A673 (cell line): ENCODE measurements at regions of chr13 and their contacts with region 1.

Region 1: GRCh38 chr13:46721054-46721453 is 75.9 kb downstream of the ESD start:
- DNase-seq: peak; percentile 71
- H3K4me3 ChIP-seq: no peak overlapping the region
- H3K27ac ChIP-seq: no peak overlapping the region
- H3K4me1 ChIP-seq: peaks cover 21% of the 10 kb centered on the region
- H3K27me3 ChIP-seq: no peaks in the 10 kb centered on the region
- CTCF ChIP-seq: peak; percentile 78

Region 2: DNA sequence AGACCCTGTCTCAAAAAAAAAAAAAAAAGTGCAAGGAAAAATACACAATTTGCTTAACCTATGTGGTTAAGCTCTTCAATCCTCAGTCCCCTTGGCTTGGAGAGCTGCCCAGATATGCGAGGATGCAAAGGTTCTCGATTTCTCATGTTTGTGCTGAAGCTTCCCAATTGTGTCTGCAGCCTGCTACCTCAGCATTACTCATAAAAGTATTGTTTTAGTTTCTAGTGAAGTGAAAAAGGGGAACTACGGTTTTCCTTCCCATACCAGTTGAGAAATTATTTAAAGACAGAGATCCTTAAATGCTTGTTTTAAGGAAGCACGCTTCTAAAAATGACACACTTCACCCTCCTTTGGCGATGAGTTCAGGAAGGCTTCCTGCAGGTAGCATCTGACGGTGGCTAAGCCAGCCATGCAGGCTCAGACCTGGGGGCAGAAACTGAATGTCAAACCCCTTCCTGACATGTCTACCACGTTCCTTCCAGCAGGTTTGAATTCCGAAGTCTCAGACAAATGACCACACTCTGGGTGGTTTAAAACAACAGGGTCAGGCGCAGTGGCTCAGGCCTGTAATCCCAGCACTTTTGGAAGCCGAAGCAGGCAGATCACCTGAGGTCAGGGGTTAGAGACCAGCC is 381.9 kb before region 1 on chr13:
- CTCF ChIA-PET with region 1: no interaction called
- POLR2A ChIA-PET with region 1: no interaction called
- intact Hi-C with region 1: no loop called
- DNase-seq: no peak
- H3K4me3 ChIP-seq: no peak overlapping the region
- H3K27ac ChIP-seq: no peak overlapping the region
- H3K4me1 ChIP-seq: peaks cover 26% of the 10 kb centered on the region
- H3K27me3 ChIP-seq: no peaks in the 10 kb centered on the region
- CTCF ChIP-seq: no peak

Region 3: GRCh38 chr13:46492946-46493345 is 228.1 kb before region 1 on chr13:
- CTCF ChIA-PET with region 1: interaction called, 7 read pairs
- POLR2A ChIA-PET with region 1: interaction called, 3 read pairs
- intact Hi-C with region 1: loop called (anchors 1 kb)
- DNase-seq: peak; percentile 74
- H3K4me3 ChIP-seq: no peak overlapping the region
- H3K27ac ChIP-seq: no peak overlapping the region
- H3K4me1 ChIP-seq: peaks cover 17% of the 10 kb centered on the region
- H3K27me3 ChIP-seq: no peaks in the 10 kb centered on the region
- CTCF ChIP-seq: peak; percentile 76